Activated CD4-positive, alpha-beta T cell treated with anti-CD3 and anti-CD28 coated beads for 36 hours (primary cell): ENCODE measurements at regions of chr6 and their contacts with region 1.

Region 1: DNA sequence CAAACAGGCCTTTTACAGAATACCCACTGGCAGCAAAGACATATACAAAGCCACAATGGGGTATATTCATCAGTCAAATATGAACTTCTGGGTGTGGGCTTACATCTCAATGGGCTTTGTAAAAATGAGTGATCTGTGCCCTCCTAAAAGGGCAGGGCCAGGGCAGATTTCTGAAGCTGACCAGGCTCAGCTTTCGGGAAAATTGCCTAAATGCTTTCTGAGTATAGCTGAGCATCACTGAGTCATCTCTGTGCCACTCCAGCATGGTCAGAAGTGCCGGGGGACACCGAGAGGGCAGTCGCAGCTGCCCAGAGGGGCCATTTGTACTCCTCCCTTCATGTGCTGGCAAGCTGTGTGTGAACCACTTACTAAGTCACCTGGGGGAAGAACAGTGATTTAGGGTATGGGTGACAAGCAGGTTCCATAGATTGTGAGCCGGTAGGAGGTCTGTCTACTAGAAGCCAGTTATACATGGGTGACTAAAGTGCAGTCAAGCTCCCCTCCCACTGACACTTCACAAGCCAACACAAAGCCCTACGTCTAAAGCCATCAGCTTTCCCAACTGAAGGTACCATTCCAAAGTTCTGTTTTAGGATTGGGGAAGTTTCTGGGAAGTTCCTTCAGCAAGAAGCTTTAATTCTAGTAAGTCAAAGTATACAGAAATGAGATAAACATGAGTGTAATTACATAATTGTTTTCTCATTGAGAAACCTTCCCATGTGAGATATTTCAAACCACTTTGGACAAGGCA is 147.6 kb upstream of the TAB2 start:
- DNase-seq: no peak
- ATAC-seq: peak; percentile 36
- H3K4me3 Mint-ChIP-seq: no peak overlapping the region
- H3K27ac Mint-ChIP-seq: no peak overlapping the region
- H3K4me1 Mint-ChIP-seq: peaks cover 27% of the 10 kb centered on the region
- H3K27me3 Mint-ChIP-seq: no peaks in the 10 kb centered on the region

Region 2: GRCh38 chr6:148776321-148777308 is 393.3 kb before region 1 on chr6:
- CTCF ChIA-PET with region 1: no interaction called
- POLR2A ChIA-PET with region 1: no interaction called
- intact Hi-C with region 1: no loop called
- DNase-seq: peak; percentile 16
- ATAC-seq: no peak
- H3K4me3 Mint-ChIP-seq: no peak overlapping the region
- H3K27ac Mint-ChIP-seq: peak overlapping the region; percentile 42
- H3K4me1 Mint-ChIP-seq: peaks cover 23% of the 10 kb centered on the region
- H3K27me3 Mint-ChIP-seq: peaks cover 2% of the 10 kb centered on the region

Region 3: GRCh38 chr6:149529650-149530049 is 359.7 kb after region 1 on chr6:
- CTCF ChIA-PET with region 1: no interaction called
- POLR2A ChIA-PET with region 1: no interaction called
- intact Hi-C with region 1: loop called in 1 of 2 experiments (anchors 10 kb)
- DNase-seq: no peak
- ATAC-seq: no peak
- H3K4me3 Mint-ChIP-seq: no peak overlapping the region
- H3K27ac Mint-ChIP-seq: no peak overlapping the region
- H3K4me1 Mint-ChIP-seq: peaks cover 19% of the 10 kb centered on the region
- H3K27me3 Mint-ChIP-seq: no peaks in the 10 kb centered on the region